PC-9 (cell line): ENCODE measurements at regions of chr17 and their contacts with region 1.

Region 1: DNA sequence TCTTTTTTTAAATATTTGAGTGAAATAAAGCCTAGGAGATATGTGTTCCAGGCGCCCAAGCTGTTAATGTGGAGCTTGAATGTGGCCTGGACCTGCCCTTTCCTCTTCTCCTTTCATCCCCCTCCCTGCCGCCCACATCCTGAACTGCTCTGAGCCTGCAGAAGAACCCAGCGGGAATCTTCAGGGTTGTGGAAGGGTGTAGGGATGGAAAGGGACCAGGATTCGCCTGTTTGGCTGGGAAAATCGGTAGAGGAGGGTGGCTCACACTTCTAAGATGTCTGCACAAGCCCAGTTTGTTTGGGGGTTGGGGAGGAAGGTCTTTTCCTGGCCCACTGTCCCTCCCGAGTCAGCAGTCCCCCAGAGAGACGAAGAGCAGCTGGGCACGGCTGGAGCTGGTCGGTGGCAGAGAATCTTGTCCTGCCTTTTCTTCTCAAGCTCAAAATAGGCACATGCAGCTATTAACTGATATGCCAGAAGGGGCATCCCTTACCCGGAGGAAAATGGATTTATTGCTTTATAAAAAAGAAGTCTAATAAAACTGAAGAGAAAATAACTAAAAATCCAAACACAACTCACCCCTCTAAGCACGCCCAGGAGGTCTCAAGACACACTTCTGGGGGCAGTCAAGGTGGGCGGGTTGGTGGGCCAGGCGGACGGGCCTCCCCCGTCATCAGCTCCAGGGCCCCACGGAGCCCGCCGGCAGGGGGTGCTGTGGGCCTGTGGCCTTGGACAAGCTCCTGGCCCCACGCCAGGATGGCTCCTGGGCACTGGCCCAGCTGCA is 11.5 kb upstream of the PITPNA start:
- DNase-seq: peak; percentile 45 to 91
- H3K4me3 ChIP-seq: no peak overlapping the region
- H3K27ac ChIP-seq: no peak overlapping the region
- H3K4me1 ChIP-seq: peaks cover 13% of the 10 kb centered on the region
- H3K27me3 ChIP-seq: no peaks in the 10 kb centered on the region
- CTCF ChIP-seq: peak; percentile 97

Region 2: GRCh38 chr17:1590031-1590748 is 16.1 kb after region 1 on chr17:
- CTCF ChIA-PET with region 1: interaction called, 5 read pairs
- POLR2A ChIA-PET with region 1: interaction called, 7 read pairs
- intact Hi-C with region 1: loop called (anchors 1 kb)
- DNase-seq: peak; percentile 84 to 95
- H3K4me3 ChIP-seq: peak overlapping the region; percentile 19; the same call in 1 of the 2 replicates
- H3K27ac ChIP-seq: peak overlapping the region; percentile 30
- H3K4me1 ChIP-seq: peaks cover 24% of the 10 kb centered on the region
- H3K27me3 ChIP-seq: no peaks in the 10 kb centered on the region
- CTCF ChIP-seq: no peak

Region 3: DNA sequence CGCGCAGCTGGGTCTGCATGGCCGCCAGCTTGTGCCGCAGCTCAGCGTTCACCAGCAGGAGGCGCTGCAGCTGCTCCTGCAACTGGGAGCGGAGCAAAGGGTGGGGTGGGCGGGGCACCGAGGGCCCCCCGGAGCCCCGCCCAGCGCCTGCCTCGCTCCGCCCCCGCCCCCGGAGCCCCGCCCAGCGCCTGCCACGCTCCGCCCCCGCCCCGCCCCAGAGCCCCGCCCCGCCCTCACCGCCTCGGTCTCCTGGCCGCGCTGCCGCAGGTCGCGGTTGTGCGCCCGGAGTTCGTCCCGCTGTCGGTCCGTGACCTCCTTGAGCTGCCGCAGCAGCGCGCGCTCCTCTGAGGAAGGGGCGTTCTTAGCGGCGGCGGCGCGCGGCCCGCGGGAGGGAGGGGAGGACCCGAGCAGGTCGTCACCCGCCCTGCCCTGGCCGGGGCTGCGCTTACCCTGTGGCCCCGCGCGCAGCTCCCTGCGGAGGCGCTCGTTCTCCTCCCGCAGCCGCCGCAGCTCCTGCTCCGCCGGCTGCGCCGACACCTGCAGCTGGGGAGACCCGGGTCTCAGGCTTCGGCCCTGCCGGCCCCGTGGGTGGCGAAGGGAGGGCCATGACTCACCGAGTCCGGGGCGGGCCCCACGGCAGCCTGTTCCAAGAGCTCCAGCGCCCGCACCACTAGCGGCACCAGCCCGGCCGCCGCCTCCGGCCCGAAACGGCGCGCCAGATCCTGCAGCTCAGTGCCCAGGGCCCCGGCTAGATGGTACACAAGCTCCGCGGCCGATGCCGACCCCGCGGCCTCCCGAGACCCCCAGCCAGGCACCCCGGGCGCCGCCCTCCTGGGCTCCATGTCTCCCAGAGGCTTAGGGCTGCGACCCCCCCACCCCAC is 75.1 kb after region 1 on chr17:
- CTCF ChIA-PET with region 1: interaction called, 28 read pairs
- POLR2A ChIA-PET with region 1: interaction called, 4 read pairs
- intact Hi-C with region 1: loop called (anchors 1 kb)
- DNase-seq: peak; percentile 79 to 98
- H3K4me3 ChIP-seq: peak overlapping the region; percentile 79
- H3K27ac ChIP-seq: peak overlapping the region; percentile 75
- H3K4me1 ChIP-seq: peaks cover 31% of the 10 kb centered on the region
- H3K27me3 ChIP-seq: no peaks in the 10 kb centered on the region
- CTCF ChIP-seq: no peak; the same call in none of the 2 replicates

Region 4: GRCh38 chr17:1661045-1661444 is 86.9 kb after region 1 on chr17:
- CTCF ChIA-PET with region 1: interaction called, 12 read pairs
- POLR2A ChIA-PET with region 1: no interaction called
- intact Hi-C with region 1: no loop called
- DNase-seq: no peak
- H3K4me3 ChIP-seq: no peak overlapping the region
- H3K27ac ChIP-seq: no peak overlapping the region
- H3K4me1 ChIP-seq: no peaks in the 10 kb centered on the region
- H3K27me3 ChIP-seq: no peaks in the 10 kb centered on the region
- CTCF ChIP-seq: no peak

Region 5: DNA sequence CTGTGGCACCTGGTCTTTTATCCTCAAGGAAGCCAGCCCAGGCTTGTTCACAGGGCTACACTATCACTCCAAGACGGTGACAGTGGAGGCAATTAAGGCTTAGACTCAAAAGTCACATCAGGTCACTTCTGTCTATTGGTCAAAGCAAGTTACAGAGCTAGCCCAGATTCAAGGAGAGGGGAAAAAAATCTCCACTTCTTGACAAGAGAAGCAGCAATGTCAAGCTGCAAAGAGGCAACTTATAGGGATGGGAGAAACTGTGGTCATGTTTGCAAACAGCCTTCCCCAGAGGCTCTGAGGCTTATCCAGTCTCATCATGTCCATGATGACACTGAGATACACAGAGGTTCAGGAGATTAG is 219.3 kb after region 1 on chr17:
- CTCF ChIA-PET with region 1: interaction called, 14 read pairs
- POLR2A ChIA-PET with region 1: no interaction called
- intact Hi-C with region 1: no loop called
- DNase-seq: no peak
- H3K4me3 ChIP-seq: no peak overlapping the region
- H3K27ac ChIP-seq: no peak overlapping the region
- H3K4me1 ChIP-seq: no peaks in the 10 kb centered on the region
- H3K27me3 ChIP-seq: no peaks in the 10 kb centered on the region
- CTCF ChIP-seq: no peak

Region 6: DNA sequence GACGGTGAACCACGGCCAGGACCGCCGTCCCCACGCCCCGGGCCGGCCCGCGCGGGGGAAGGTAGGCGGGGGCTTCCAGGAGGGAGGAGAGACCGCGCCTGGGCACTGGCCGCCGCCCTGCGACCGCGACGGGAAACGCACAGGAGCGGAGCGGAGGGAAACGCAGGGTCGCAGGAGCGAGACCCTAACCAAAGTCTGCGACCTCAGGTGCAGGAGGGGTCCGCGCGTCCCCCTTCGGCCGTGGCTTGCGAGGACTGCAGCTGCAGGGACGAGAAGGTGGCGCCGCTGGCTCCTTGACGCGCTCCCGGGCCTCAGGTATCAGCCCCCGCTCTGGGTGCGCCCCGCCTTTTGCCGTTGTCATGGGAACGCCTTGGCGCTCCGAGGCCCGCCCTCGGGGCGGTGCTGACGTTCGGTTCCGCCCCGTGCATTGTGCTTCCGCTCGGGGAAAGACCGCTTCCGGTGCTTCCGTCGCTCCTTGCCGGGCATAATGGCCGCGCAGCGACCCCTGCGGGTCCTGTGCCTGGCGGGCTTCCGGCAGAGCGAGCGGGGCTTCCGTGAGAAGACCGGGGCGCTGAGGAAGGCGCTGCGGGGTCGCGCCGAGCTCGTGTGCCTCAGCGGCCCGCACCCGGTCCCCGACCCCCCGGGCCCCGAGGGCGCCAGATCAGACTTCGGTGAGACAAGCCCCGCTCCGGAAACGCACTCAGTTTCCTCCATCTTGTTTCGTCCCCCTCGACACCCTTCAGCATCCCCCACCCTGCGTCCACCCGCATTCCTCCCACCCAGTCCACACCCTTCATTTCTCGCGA is 467.7 kb after region 1 on chr17 and contains the start of gene OVCA2:
- CTCF ChIA-PET with region 1: no interaction called
- POLR2A ChIA-PET with region 1: no interaction called
- intact Hi-C with region 1: loop called (anchors 5 kb)
- DNase-seq: peak; percentile 82 to 98
- H3K4me3 ChIP-seq: peak within 1 kb of the TSS; percentile 93
- H3K27ac ChIP-seq: peak within 1 kb of the TSS; percentile 73
- H3K4me1 ChIP-seq: peaks cover 35% of the 10 kb centered on the region
- H3K27me3 ChIP-seq: no peaks in the 10 kb centered on the region
- CTCF ChIP-seq: peak; percentile 49
- total RNA-seq, gene OVCA2: 34.4 and 35.4 TPM in 2 replicates